ENCODE measurements at regions of chr12 and their contacts with region 1.

Region 1: GRCh38 chr12:20451761-20452160 is 83.4 kb downstream of the PDE3A start:
- DNase-seq: no peak

Region 2: GRCh38 chr12:20289512-20289911 is 162.2 kb before region 1 on chr12:
- intact Hi-C with region 1: no loop called
- DNase-seq: no peak

Region 3: GRCh38 chr12:20390846-20391245 is 60.9 kb before region 1 on chr12:
- intact Hi-C with region 1: no loop called
- DNase-seq: no peak

Region 4: GRCh38 chr12:20426191-20426590 is 25.6 kb before region 1 on chr12:
- intact Hi-C with region 1: no loop called
- DNase-seq: peak; percentile 86

Region 5: DNA sequence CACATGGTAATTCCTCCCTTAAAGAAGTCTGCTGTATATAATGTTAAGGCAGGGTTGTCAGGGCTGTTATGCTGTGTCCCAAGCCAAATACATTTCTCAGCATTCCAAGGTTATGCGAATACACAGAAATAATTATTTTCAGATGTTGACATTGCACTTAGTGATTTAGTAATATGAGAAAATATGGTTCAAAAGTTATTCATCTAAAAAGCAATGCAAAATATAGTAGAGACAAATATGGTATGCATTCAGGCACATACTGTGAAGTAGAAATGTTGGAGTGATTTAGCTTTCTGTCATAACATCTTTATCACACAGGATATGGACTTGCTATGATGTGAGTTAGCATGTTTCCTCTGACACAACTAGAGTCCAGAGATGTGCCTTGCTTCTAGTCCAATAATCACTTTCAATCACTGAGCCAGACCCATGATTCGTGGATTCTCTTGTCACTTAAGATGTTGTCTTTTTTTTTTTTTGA is 13.4 kb before region 1 on chr12:
- intact Hi-C with region 1: no loop called
- DNase-seq: no peak

Region 6: DNA sequence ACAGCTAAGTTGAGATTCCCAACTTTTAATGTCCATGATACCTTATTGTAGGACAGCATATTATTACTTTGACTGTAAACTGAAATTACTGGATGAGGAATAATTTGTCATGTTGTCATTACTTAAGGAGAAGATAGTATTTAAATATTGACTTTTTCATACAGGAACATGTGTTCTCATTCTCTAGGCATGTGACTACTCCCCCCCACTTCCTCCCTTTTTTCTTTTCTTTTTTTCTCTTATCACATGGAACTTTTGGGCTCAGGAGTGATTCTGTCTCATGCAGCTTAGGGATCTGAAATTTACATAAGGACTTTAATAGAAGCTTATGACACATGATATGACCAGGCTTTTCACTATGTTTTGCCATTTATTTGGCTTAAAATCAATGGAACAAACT is 115.7 kb after region 1 on chr12:
- intact Hi-C with region 1: loop called in 1 of 2 experiments (anchors 10 kb)
- DNase-seq: no peak

Measured in posterior vena cava (tissue), 2 donors.